Activated CD4-positive, alpha-beta memory T cell treated with anti-CD3 and anti-CD28 coated beads, Interleukin-2, amount 10 ng/mL, durations not matched to agents 7 days and 5 days (primary cell): ENCODE measurements at regions of chr18 and their contacts with region 1.

Region 1: DNA sequence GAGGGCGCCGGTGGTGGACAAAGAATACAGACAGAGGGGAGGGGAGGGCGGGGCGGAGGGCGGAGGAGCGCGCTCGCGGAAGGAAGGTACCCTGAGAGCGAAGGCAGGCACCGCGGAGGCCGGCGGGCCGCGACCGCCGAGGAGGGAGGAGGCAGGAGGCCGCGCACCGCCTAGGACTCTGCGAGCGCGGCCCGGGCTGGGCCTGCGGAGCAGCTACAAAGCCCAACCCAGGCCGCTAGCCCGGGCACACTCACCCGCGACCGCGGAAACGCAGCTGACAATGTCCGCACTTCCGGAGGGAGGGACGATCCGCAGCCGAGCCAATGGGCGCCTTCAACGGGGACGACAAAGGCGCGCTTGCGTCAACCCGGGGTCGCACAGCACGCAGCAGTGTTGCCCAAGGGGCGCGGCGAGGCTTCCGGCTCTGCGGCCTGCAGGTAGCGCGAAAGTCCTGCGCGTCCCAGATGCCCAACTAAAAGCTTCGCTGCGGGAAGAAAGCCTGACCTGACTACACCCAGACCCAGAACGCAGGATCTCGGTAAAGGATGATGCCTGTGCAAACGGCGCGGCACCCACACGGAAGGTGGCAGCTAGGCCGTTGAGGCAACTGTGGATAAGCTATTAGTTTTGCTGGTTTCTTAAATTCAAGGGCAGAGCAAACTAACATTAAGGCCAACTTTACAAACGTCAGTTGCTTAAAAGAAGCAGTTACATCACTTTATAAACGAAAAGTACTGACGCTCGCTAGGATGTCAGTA is at the start of gene C18orf32:
- DNase-seq: peak; percentile 96
- H3K4me3 Mint-ChIP-seq: peak within 1 kb of the TSS; percentile 95
- H3K27ac Mint-ChIP-seq: peak within 1 kb of the TSS; percentile 96
- H3K4me1 Mint-ChIP-seq: peaks cover 65% of the 10 kb centered on the region
- H3K27me3 Mint-ChIP-seq: no peaks in the 10 kb centered on the region
- total RNA-seq, gene C18orf32: 31.7 to 33.7 TPM

Region 2: GRCh38 chr18:49161627-49162026 is 325.5 kb before region 1 on chr18:
- CTCF ChIA-PET with region 1: no interaction called
- POLR2A ChIA-PET with region 1: no interaction called
- DNase-seq: peak; percentile 55
- H3K4me3 Mint-ChIP-seq: no peak overlapping the region
- H3K27ac Mint-ChIP-seq: no peak overlapping the region
- H3K4me1 Mint-ChIP-seq: peaks cover 24% of the 10 kb centered on the region
- H3K27me3 Mint-ChIP-seq: no peaks in the 10 kb centered on the region

Region 3: GRCh38 chr18:49399003-49399402 is 88.1 kb before region 1 on chr18:
- CTCF ChIA-PET with region 1: no interaction called
- POLR2A ChIA-PET with region 1: no interaction called
- DNase-seq: no peak
- H3K4me3 Mint-ChIP-seq: no peak overlapping the region
- H3K27ac Mint-ChIP-seq: peak overlapping the region; percentile 51
- H3K4me1 Mint-ChIP-seq: peaks cover 38% of the 10 kb centered on the region
- H3K27me3 Mint-ChIP-seq: no peaks in the 10 kb centered on the region

Region 4: DNA sequence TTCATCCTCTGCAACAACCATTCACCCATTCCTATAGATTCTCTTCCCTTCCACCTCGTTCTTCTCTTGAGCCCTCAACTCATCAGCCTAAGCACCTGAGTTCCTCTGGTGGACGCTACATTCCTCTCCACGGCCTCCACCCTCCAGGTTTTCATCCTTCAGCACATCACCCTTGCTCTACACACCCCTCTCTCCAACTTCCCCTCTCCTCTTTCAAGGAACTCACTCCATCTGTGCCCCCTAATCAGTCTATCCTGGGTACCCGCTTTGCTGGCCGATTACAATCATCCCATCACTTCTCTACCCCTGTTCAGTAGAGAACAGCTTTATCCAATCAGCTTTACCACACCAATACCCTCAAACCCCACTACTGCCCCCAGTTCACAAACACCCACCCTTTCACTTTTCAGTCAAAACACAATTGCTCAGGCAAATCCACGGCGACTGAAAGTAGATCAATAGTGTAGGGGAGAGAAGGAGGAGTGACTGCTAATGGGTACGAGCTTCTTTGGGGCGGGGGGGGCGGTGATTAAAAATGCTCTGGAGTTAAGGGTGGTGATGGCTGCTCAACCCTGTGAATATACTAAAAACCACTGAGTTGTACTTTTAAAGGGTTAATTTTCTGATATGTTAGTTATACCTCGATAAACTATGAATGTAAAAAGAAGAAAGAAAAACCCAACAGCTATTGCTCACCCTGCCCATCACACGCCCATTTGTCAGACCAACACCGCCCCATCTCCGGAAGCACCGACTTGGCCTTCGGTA is 27.5 kb before region 1 on chr18:
- CTCF ChIA-PET with region 1: interaction called, 5 read pairs
- POLR2A ChIA-PET with region 1: interaction called, 44 read pairs
- DNase-seq: peak; percentile 26
- H3K4me3 Mint-ChIP-seq: peak overlapping the region; percentile 82
- H3K27ac Mint-ChIP-seq: peak overlapping the region; percentile 18
- H3K4me1 Mint-ChIP-seq: peaks cover 45% of the 10 kb centered on the region
- H3K27me3 Mint-ChIP-seq: peaks cover 5% of the 10 kb centered on the region

Region 5: DNA sequence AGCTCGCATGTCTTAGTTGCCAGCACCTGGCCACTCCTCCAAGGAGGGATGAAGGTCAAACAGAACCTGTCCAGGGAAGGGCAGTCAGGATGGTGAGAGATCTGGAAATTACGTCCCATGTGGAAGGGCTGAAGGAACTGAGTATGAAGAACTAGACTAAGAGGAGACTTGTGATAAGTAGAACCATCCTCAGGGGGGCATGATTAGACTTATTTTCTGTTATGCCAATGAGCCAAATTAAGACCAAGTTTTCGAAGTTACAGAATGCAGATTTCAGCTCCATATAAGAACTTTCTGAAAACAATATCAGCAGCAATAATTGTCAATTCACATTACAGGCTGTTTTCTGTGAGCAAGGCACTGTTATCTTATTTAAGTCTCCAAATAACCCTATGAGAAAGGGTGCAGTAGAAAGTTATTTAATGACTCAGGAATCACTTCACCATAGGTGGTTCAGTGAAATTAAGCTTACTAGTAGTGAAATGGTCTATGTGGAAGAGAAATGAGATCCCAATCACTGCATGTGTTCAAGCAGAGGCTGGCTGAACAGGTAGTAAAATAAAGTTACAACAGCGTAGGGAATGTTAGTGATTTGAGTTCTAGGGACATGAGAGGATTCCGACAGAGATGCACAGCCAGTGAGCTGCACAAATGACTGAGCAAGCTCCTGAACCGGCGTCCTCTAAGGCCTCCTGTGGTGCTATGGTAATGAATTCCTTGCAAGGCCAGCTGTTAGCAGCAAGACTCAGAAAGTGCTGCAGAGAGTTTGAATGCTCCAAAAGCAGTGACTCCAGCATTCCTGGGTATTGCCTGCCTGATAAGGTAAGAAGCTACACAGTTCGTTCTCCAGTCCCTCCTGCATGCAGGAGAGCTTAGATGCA is 22.2 kb before region 1 on chr18:
- CTCF ChIA-PET with region 1: interaction called, 5 read pairs
- POLR2A ChIA-PET with region 1: interaction called, 44 read pairs
- DNase-seq: no peak
- H3K4me3 Mint-ChIP-seq: no peak overlapping the region
- H3K27ac Mint-ChIP-seq: no peak overlapping the region
- H3K4me1 Mint-ChIP-seq: peaks cover 10% of the 10 kb centered on the region
- H3K27me3 Mint-ChIP-seq: peaks cover 10% of the 10 kb centered on the region

Region 6: GRCh38 chr18:49645841-49646351 is 158.8 kb after region 1 on chr18:
- CTCF ChIA-PET with region 1: no interaction called
- POLR2A ChIA-PET with region 1: no interaction called
- DNase-seq: no peak
- H3K4me3 Mint-ChIP-seq: no peak overlapping the region
- H3K27ac Mint-ChIP-seq: no peak overlapping the region
- H3K4me1 Mint-ChIP-seq: no peaks in the 10 kb centered on the region
- H3K27me3 Mint-ChIP-seq: no peaks in the 10 kb centered on the region